ENCODE measurements at regions of chr1 and their contacts with region 1.

Region 1: GRCh38 chr1:84506002-84506728 is at the starts of genes GNG5 and SPATA1:
- DNase-seq: peak; percentile 97 to 98
- ATAC-seq: peak; percentile 86 to 91
- H3K4me3 ChIP-seq: peak within 1 kb of the TSS; percentile 77 to 92 (median 81)
- H3K27ac ChIP-seq: peak within 1 kb of the TSS; percentile 96 to 97 (median 96)
- H3K4me1 ChIP-seq: peaks cover 34% of the 10 kb centered on the region in 2 donors
- H3K27me3 ChIP-seq: no peaks in the 10 kb centered on the region
- CTCF ChIP-seq: no peak
- POLR2A ChIP-seq: peak; percentile 88 to 93
- total RNA-seq, gene GNG5: 122 to 168 (median 128) TPM
- total RNA-seq, gene SPATA1: 0.35 TPM in 1 of 4 donors, not detected in the others

Region 2: GRCh38 chr1:84077476-84078107 is 428.6 kb before region 1 on chr1:
- in situ Hi-C with region 1: no loop called
- intact Hi-C with region 1: loop called (anchors 5 kb)
- DNase-seq: peak; percentile 12 to 42
- ATAC-seq: peak; percentile 92 to 94
- H3K4me3 ChIP-seq: peak overlapping the region; percentile 78 to 96 (median 80)
- H3K27ac ChIP-seq: peak overlapping the region; percentile 80 to 87 (median 86)
- H3K4me1 ChIP-seq: peaks cover 10 to 14% of the 10 kb centered on the region in 2 donors
- H3K27me3 ChIP-seq: no peaks in the 10 kb centered on the region
- CTCF ChIP-seq: no peak
- POLR2A ChIP-seq: peak in 1 of 2 donors; percentile 40

Region 3: GRCh38 chr1:84377480-84378095 is 128.6 kb before region 1 on chr1:
- in situ Hi-C with region 1: no loop called
- intact Hi-C with region 1: loop called (anchors 10 kb)
- DNase-seq: peak in 1 of 2 donors; percentile 23
- ATAC-seq: no peak
- H3K4me3 ChIP-seq: no peak overlapping the region
- H3K27ac ChIP-seq: peak overlapping the region; percentile 74 to 87 (median 77)
- H3K4me1 ChIP-seq: peaks cover 43 to 54% of the 10 kb centered on the region in 2 donors
- H3K27me3 ChIP-seq: no peaks in the 10 kb centered on the region
- CTCF ChIP-seq: no peak
- POLR2A ChIP-seq: no peak

Region 4: GRCh38 chr1:84550826-84551225 is 44.7 kb after region 1 on chr1:
- in situ Hi-C with region 1: no loop called
- intact Hi-C with region 1: loop called (anchors 1 kb)
- DNase-seq: no peak
- ATAC-seq: no peak
- H3K4me3 ChIP-seq: no peak overlapping the region
- H3K27ac ChIP-seq: no peak overlapping the region
- H3K4me1 ChIP-seq: no peaks in the 10 kb centered on the region
- H3K27me3 ChIP-seq: no peaks in the 10 kb centered on the region
- CTCF ChIP-seq: no peak
- POLR2A ChIP-seq: no peak

Region 5: GRCh38 chr1:84603941-84604830 is 98.0 kb after region 1 on chr1:
- in situ Hi-C with region 1: no loop called
- intact Hi-C with region 1: loop called (anchors 10 kb)
- DNase-seq: peak; percentile 15 to 50
- ATAC-seq: peak; percentile 71 to 96
- H3K4me3 ChIP-seq: peak overlapping the region; percentile 15 to 36 (median 31)
- H3K27ac ChIP-seq: peak overlapping the region; percentile 33 to 72 (median 54)
- H3K4me1 ChIP-seq: peaks cover 0 to 4% of the 10 kb centered on the region in 2 donors
- H3K27me3 ChIP-seq: no peaks in the 10 kb centered on the region
- CTCF ChIP-seq: peak; percentile 41 to 70 (median 52)
- POLR2A ChIP-seq: no peak

Region 6: GRCh38 chr1:84781946-84782771 is 276.0 kb after region 1 on chr1:
- in situ Hi-C with region 1: no loop called
- intact Hi-C with region 1: no loop called
- DNase-seq: peak in 1 of 2 donors; percentile 28
- ATAC-seq: no peak
- H3K4me3 ChIP-seq: no peak overlapping the region
- H3K27ac ChIP-seq: no peak overlapping the region
- H3K4me1 ChIP-seq: no peaks in the 10 kb centered on the region
- H3K27me3 ChIP-seq: no peaks in the 10 kb centered on the region
- CTCF ChIP-seq: peak in 2 of 5 experiments; percentile 24 to 56
- POLR2A ChIP-seq: no peak

Region 7: DNA sequence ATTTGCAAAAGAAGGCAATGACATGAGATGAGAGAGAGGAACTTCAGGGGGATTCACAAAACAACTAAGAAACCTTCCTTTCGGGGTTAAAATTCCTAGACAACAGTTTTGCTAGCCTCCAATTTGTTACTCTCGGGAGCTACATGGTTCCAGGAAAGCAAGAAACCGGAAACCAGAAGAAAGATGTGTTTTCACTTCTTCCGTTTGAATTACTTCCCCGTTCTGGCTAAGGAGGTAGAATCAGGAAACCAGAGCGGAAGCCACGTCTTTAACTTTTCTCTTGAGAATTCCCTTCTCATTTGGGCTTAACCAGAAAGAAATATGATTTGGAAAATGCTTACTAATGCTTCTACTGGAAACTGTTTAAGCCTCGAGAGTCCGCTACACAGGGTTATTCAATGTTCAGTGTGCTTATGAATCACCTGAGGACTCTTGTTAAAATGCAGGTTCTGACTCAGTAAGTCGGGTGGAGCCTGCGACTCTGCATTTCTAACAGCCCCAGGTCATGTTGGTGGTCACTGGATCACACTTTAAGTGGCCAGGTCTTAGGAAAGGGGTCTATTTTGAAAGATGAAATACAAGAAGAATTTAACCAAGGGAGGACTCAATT is 585.6 kb after region 1 on chr1:
- in situ Hi-C with region 1: no loop called
- intact Hi-C with region 1: no loop called
- DNase-seq: no peak
- ATAC-seq: no peak
- H3K4me3 ChIP-seq: no peak overlapping the region
- H3K27ac ChIP-seq: no peak overlapping the region
- H3K4me1 ChIP-seq: no peaks in the 10 kb centered on the region
- H3K27me3 ChIP-seq: no peaks in the 10 kb centered on the region
- CTCF ChIP-seq: no peak
- POLR2A ChIP-seq: no peak